IMR-90 (cell line): ENCODE measurements at regions of chr2 and their contacts with region 1.

Region 1: DNA sequence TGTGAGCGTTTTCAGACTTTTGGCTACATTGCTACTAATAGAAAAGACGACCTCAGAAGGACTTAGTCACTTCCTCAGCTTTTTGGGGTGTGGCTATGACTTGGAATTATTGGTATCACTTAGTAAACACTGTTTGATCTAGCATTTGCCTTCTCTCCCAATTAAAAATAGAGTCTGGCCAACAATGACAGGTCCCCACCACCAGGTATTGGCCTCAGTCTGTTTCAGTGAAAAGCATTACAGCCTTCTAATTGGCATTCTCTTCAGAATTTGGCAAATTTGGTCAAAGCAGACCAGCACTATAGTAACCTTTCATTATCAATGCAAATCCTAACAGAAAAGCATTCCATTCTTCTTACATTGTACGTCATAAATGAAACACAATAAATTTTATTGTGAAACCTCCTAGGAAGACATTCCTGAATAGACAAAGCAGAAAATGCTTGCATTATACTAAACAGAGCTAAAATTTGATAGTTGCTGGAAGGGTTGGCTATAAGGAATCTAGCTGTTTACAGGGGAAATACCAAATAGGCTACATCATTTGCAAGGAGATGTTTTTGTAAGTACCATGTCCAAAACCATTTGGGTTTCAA is 613.9 kb downstream of the IRS1 start:
- DNase-seq: peak; percentile 98
- ATAC-seq: peak; percentile 73
- H3K4me3 ChIP-seq: peak overlapping the region; percentile 24; the same call in 1 of the 2 replicates
- H3K27ac ChIP-seq: peak overlapping the region; percentile 100
- H3K4me1 ChIP-seq: peaks cover 28% of the 10 kb centered on the region
- H3K27me3 ChIP-seq: no peaks in the 10 kb centered on the region
- CTCF ChIP-seq: no peak
- POLR2A ChIP-seq: no peak
- RAD21 ChIP-seq: no peak; the same call in 1 of the 2 replicates

Region 2: DNA sequence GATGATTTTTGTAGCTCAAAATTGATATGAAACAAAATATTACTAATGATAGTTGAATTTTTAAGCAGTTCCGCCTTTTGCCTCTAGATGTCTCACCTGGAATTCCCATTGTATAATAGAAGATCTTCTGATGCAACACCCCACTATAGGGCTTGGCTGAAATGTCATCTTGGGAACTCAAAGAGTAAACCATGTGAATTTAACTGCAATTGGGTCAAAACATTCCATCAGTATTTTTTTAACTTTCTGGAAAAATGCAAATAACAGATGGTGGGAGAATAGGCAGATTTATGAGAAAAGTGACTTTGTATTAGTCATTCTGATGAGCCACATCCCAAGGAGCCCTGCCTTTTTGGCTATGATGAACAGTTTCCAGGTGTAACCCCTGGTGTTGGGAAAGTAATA is 296.3 kb before region 1 on chr2:
- CTCF ChIA-PET with region 1: interaction called, 6 read pairs
- POLR2A ChIA-PET with region 1: no interaction called
- dilution Hi-C with region 1: no loop called
- in situ Hi-C with region 1: loop called (anchors 25 kb)
- intact Hi-C with region 1: loop called (anchors 1 kb)
- DNase-seq: peak; percentile 94
- ATAC-seq: peak; percentile 81
- H3K4me3 ChIP-seq: no peak overlapping the region
- H3K27ac ChIP-seq: peak overlapping the region; percentile 40; the same call in 1 of the 2 replicates
- H3K4me1 ChIP-seq: peaks cover 6% of the 10 kb centered on the region
- H3K27me3 ChIP-seq: no peaks in the 10 kb centered on the region
- CTCF ChIP-seq: peak; percentile 85
- POLR2A ChIP-seq: no peak
- RAD21 ChIP-seq: peak; percentile 82

Region 3: DNA sequence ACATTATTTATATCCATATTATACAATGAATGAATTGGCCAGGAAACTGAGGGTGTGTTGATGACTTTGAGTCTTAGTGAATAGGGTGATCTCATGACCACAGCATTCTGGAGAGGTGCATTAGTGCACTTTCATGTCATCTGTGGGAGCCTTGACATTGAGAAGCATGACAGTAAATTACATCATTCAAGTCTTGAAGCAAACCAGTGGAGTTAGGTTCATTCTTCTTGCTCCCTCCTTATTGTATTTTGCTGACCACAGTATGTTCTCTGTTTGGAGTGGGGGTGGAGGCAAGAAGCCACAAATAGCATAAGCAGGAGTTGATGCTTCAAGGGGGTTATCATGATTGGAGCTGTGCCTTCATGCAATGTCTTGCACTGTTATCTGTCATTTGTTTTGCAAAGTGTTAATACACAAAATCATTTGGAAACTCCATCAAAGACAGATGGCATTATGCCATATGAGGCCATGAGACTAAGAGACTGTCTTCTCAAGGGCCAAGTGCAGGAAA is 106.0 kb before region 1 on chr2:
- CTCF ChIA-PET with region 1: no interaction called
- POLR2A ChIA-PET with region 1: interaction called, 3 read pairs
- dilution Hi-C with region 1: no loop called
- in situ Hi-C with region 1: no loop called
- intact Hi-C with region 1: loop called (anchors 1 kb)
- DNase-seq: peak; percentile 98
- ATAC-seq: peak; percentile 70
- H3K4me3 ChIP-seq: no peak overlapping the region
- H3K27ac ChIP-seq: peak overlapping the region; percentile 81
- H3K4me1 ChIP-seq: peaks cover 12% of the 10 kb centered on the region
- H3K27me3 ChIP-seq: no peaks in the 10 kb centered on the region
- CTCF ChIP-seq: no peak
- POLR2A ChIP-seq: no peak
- RAD21 ChIP-seq: no peak

Region 4: DNA sequence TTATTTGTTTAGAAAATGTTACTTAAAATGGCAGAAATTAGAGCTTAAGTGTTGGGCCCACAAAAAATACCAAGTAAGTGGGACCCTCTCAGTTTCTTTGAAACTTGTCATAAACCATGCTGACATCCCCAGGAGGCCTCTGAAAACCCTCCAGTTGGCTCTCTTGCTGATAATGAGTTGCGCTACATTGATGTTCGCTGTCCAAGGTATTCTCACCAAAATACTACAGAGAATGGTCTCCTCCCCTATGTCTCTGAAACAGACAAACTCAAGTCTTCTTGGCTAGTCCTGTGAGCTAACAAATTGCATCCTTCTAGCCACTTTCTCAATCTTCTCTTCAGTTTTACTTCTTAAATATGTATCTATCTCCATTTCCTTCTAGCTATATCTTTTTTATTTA is 55.5 kb before region 1 on chr2:
- CTCF ChIA-PET with region 1: no interaction called
- POLR2A ChIA-PET with region 1: no interaction called
- dilution Hi-C with region 1: no loop called
- in situ Hi-C with region 1: no loop called
- intact Hi-C with region 1: no loop called
- DNase-seq: peak; percentile 34
- ATAC-seq: no peak
- H3K4me3 ChIP-seq: no peak overlapping the region
- H3K27ac ChIP-seq: no peak overlapping the region
- H3K4me1 ChIP-seq: no peaks in the 10 kb centered on the region; the same call in 1 of the 2 replicates
- H3K27me3 ChIP-seq: no peaks in the 10 kb centered on the region
- CTCF ChIP-seq: no peak
- POLR2A ChIP-seq: no peak
- RAD21 ChIP-seq: no peak

Region 5: DNA sequence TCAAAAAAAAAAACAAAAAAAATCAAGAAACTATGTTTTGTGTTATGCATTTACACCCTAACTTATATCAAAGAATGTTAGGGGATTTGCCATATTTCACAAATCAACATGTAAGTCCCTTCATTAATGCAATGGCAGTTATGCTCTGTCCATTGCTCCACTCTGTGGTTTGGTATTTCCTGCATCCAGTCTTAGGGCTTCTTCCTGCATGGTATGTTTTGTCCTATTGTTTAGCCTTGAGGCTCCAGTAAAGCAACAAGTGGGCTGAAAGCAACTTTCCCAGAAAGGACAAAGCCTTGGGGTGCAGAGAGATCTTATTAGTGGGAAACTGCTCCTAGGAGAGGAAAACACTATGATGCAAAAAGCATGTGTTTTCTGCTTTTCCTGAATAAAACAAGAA is 139.8 kb after region 1 on chr2:
- CTCF ChIA-PET with region 1: no interaction called
- POLR2A ChIA-PET with region 1: no interaction called
- dilution Hi-C with region 1: no loop called
- in situ Hi-C with region 1: no loop called
- intact Hi-C with region 1: no loop called
- DNase-seq: no peak
- ATAC-seq: no peak
- H3K4me3 ChIP-seq: no peak overlapping the region
- H3K27ac ChIP-seq: no peak overlapping the region
- H3K4me1 ChIP-seq: no peaks in the 10 kb centered on the region
- H3K27me3 ChIP-seq: no peaks in the 10 kb centered on the region
- CTCF ChIP-seq: no peak
- POLR2A ChIP-seq: no peak
- RAD21 ChIP-seq: no peak

Region 6: GRCh38 chr2:226423498-226423960 is 237.8 kb after region 1 on chr2:
- CTCF ChIA-PET with region 1: no interaction called
- POLR2A ChIA-PET with region 1: no interaction called
- dilution Hi-C with region 1: no loop called
- in situ Hi-C with region 1: no loop called
- intact Hi-C with region 1: loop called (anchors 1 kb)
- DNase-seq: peak; percentile 51
- ATAC-seq: no peak
- H3K4me3 ChIP-seq: no peak overlapping the region
- H3K27ac ChIP-seq: peak overlapping the region; percentile 80
- H3K4me1 ChIP-seq: peaks cover 24% of the 10 kb centered on the region
- H3K27me3 ChIP-seq: no peaks in the 10 kb centered on the region
- CTCF ChIP-seq: no peak
- POLR2A ChIP-seq: no peak
- RAD21 ChIP-seq: no peak

Region 7: GRCh38 chr2:226561962-226562361 is 376.2 kb after region 1 on chr2:
- CTCF ChIA-PET with region 1: no interaction called
- POLR2A ChIA-PET with region 1: no interaction called
- dilution Hi-C with region 1: no loop called
- in situ Hi-C with region 1: no loop called
- intact Hi-C with region 1: no loop called
- DNase-seq: peak; percentile 39
- ATAC-seq: no peak
- H3K4me3 ChIP-seq: no peak overlapping the region
- H3K27ac ChIP-seq: no peak overlapping the region
- H3K4me1 ChIP-seq: peaks cover 2% of the 10 kb centered on the region; the same call in 1 of the 2 replicates
- H3K27me3 ChIP-seq: no peaks in the 10 kb centered on the region
- CTCF ChIP-seq: no peak
- POLR2A ChIP-seq: no peak
- RAD21 ChIP-seq: no peak

Region 8: GRCh38 chr2:226583715-226584114 is 398.0 kb after region 1 on chr2:
- CTCF ChIA-PET with region 1: no interaction called
- POLR2A ChIA-PET with region 1: no interaction called
- dilution Hi-C with region 1: no loop called
- in situ Hi-C with region 1: no loop called
- intact Hi-C with region 1: loop called (anchors 10 kb)
- DNase-seq: peak; percentile 89
- ATAC-seq: peak; percentile 90
- H3K4me3 ChIP-seq: no peak overlapping the region
- H3K27ac ChIP-seq: peak overlapping the region; percentile 34
- H3K4me1 ChIP-seq: peaks cover 23% of the 10 kb centered on the region; the same call in 1 of the 2 replicates
- H3K27me3 ChIP-seq: no peaks in the 10 kb centered on the region
- CTCF ChIP-seq: no peak
- POLR2A ChIP-seq: no peak
- RAD21 ChIP-seq: 0 out of 2 replicates have a peak, but pooled peaks have one; percentile 10

Region 9: DNA sequence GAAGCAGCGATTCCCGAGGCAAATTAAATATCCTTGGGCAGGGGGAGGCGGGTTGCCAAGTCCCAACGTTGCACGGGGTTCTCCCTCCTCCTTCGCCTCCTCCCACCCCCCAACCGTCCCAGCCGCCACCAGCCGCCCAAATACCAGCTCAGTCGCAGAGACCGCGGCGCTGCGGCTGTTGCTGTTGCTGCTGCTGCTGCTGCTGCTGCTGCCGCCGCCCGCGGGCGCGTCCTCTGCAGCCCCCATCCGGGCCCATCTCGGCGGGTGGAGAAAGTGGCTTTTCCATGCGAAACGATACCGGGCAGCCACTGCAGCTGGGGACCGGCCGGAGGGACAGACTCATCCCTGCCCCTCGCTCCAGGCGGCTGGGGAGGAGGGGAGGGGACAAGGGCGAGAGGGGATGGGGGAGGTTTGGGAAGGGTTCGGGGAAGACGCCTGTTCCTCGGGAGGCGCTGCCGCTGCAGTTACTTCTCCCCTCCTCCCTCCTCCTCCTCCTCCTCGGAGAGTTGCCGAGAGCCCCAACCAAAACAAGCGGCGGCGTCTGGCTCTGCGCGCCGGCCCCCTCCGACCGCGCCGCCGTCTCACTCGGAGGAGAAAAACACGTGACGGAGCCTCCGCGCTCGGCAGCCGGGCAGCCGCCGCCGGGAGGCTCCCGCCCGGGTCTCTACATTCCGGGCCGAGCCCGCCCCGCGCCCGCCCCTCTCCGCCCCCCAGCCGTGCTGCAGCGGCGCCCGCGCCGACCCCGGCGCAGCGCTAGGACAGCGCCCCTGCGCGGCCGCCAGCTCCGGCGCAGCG is 613.7 kb after region 1 on chr2 and contains the start of gene IRS1:
- CTCF ChIA-PET with region 1: interaction called, 4 read pairs
- POLR2A ChIA-PET with region 1: no interaction called
- dilution Hi-C with region 1: no loop called
- in situ Hi-C with region 1: loop called (anchors 5 kb)
- intact Hi-C with region 1: loop called (anchors 1 kb)
- DNase-seq: peak; percentile 79
- ATAC-seq: peak; percentile 40
- H3K4me3 ChIP-seq: peak within 1 kb of the TSS; percentile 78
- H3K27ac ChIP-seq: peak within 1 kb of the TSS; percentile 97
- H3K4me1 ChIP-seq: peaks cover 2% of the 10 kb centered on the region; the same call in 1 of the 2 replicates
- H3K27me3 ChIP-seq: no peaks in the 10 kb centered on the region
- CTCF ChIP-seq: peak; percentile 62
- POLR2A ChIP-seq: no peak
- RAD21 ChIP-seq: peak; percentile 53
- total RNA-seq, gene IRS1: 21.1 and 29.4 TPM in 2 replicates

Region 10: GRCh38 chr2:227106845-227107759 is 921.4 kb after region 1 on chr2:
- CTCF ChIA-PET with region 1: no interaction called
- POLR2A ChIA-PET with region 1: no interaction called
- dilution Hi-C with region 1: no loop called
- in situ Hi-C with region 1: no loop called
- intact Hi-C with region 1: loop called (anchors 10 kb)
- DNase-seq: peak; percentile 71
- ATAC-seq: peak; percentile 98
- H3K4me3 ChIP-seq: no peak overlapping the region
- H3K27ac ChIP-seq: no peak overlapping the region
- H3K4me1 ChIP-seq: no peaks in the 10 kb centered on the region
- H3K27me3 ChIP-seq: peaks cover 2% of the 10 kb centered on the region; the same call in 1 of the 2 replicates
- CTCF ChIP-seq: peak; percentile 93
- POLR2A ChIP-seq: no peak
- RAD21 ChIP-seq: peak; percentile 90